Activated B cell treated with CpG ODN at 0.5 μM for 24 hours (primary cell): ENCODE measurements at regions of chr11 and their contacts with region 1.

Region 1: DNA sequence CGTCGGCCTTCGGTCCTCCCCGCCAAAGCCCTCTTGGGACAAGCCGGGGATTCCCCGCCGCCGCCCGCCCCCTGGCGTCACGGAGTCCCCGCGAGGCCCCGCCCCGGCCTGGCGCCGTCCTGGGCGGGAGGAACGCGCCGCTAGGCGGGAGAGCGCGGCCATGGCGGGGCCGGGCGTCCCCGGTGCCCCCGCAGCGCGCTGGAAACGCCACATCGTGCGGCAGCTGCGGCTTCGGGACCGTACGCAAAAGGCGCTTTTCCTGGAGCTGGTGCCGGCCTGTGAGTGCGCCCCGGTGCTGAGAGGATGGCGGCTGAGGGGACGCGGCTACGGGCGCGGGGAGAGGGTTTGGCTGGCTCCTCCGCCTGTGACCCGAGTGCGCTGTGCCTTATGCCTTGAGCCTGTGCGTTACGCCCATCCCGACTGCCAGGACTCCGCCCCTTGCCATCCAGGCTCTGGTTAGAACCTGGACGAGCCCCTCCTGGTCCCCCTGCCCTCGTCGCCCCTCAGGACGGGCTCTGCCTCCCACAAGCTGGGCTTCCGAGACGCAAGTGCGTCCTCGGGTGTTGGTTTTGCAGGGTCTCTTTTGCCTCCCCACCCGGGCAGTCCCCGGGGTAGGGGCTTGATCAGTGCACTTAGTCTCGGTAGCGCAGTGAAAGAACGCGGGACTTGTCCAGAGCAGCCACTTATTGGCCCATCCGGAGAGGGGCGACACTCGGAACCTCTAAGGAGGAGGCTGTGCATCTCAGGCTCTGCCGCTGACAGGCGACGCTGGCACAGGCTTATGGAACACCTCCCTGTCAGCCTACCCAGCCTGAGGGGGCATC is at the start of gene ATG16L2:
- DNase-seq: peak; percentile 97
- ATAC-seq: peak; percentile 75
- H3K4me3 Mint-ChIP-seq: peak within 1 kb of the TSS; percentile 98
- H3K27ac Mint-ChIP-seq: peak within 1 kb of the TSS; percentile 94
- H3K4me1 Mint-ChIP-seq: peaks cover 54% of the 10 kb centered on the region
- H3K27me3 Mint-ChIP-seq: no peaks in the 10 kb centered on the region
- CTCF ChIP-seq: no peak
- total RNA-seq, gene ATG16L2: 73.5 and 96.7 TPM in 2 replicates

Region 2: DNA sequence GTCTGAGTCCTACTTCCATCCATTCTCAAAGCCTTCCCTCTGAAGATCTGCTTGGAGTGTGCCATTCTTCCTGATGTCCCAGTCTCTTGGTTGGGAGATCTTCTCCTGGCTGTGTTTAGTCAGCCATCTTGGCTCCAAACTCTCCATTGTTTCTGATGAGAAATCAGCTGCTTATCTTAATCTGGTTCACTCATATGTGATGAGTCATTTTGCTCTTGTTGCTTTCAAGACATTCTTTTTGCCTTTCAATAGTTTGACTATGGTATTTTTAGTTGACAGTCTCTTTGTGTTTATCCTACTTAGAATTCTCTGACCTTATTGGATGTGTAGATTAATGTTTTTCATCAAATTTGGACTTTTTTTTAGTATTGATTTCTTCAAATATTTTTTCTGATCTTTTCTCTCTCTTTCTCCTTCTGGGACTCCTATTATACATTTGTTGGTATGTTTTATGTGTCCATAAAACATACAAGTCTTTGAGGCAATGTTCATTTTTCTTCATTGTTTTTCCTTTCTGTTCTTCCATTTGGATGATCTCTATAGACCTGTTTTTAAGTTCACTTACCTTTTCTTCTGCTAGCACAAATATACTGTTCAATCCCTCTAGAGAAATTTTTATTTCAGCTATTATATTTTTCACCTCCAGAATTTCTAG is 303.0 kb before region 1 on chr11:
- CTCF ChIA-PET with region 1: no interaction called
- POLR2A ChIA-PET with region 1: no interaction called
- intact Hi-C with region 1: no loop called
- DNase-seq: no peak
- ATAC-seq: no peak
- H3K4me3 Mint-ChIP-seq: no peak overlapping the region
- H3K27ac Mint-ChIP-seq: no peak overlapping the region
- H3K4me1 Mint-ChIP-seq: no peaks in the 10 kb centered on the region
- H3K27me3 Mint-ChIP-seq: peaks cover 23% of the 10 kb centered on the region
- CTCF ChIP-seq: no peak

Region 3: GRCh38 chr11:72781313-72782050 is 33.0 kb before region 1 on chr11:
- CTCF ChIA-PET with region 1: no interaction called
- POLR2A ChIA-PET with region 1: interaction called, 8 read pairs
- intact Hi-C with region 1: loop called (anchors 1 kb)
- DNase-seq: peak; percentile 59
- ATAC-seq: peak; percentile 82
- H3K4me3 Mint-ChIP-seq: peak overlapping the region; percentile 83
- H3K27ac Mint-ChIP-seq: no peak overlapping the region
- H3K4me1 Mint-ChIP-seq: peaks cover 35% of the 10 kb centered on the region
- H3K27me3 Mint-ChIP-seq: no peaks in the 10 kb centered on the region
- CTCF ChIP-seq: no peak

Region 4: DNA sequence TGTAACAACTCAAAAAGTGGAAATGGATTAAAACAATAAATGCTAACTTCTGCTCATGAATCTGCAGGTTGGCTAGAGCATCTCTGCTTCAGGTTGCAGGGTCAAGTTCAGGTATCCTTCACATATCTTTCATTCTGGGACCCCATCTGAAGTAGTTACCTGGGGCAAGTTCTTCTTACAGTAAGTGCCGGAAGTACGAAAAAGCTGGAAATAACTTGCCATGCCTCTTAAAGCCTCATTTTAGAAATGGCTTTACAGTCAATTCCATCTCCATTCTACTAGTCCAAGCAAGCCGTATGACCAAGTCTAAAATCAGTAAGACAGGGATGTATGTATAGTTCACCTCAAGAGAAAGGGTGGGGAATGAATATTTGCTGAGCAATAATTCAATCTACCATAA is 233.9 kb after region 1 on chr11:
- CTCF ChIA-PET with region 1: no interaction called
- POLR2A ChIA-PET with region 1: no interaction called
- intact Hi-C with region 1: no loop called
- DNase-seq: no peak
- ATAC-seq: no peak
- H3K4me3 Mint-ChIP-seq: peak overlapping the region; percentile 64
- H3K27ac Mint-ChIP-seq: peak overlapping the region; percentile 93
- H3K4me1 Mint-ChIP-seq: peaks cover 74% of the 10 kb centered on the region
- H3K27me3 Mint-ChIP-seq: no peaks in the 10 kb centered on the region
- CTCF ChIP-seq: no peak